Activated naive CD4-positive, alpha-beta T cell treated with anti-CD3 and anti-CD28 coated beads for 36 hours (primary cell): ENCODE measurements at regions of chr6 and their contacts with region 1.

Region 1: DNA sequence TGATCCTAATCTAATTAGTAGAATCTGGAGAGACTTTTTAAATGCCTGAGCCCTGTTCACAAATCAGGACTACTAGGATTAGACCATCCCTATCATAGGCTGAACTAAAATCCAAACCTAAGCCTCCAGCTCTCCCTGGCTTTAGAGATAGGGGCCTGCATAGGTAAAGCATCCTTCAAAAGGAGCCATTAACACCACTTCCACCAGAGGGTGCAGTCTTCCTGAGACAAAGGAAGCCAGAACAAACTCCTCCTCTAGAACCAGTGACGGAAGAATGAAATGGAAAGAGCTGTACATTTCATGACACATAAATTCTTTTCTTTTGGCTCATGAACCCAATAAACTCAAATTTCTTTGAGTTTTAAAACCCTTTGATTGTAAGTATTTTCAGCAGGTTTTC is 291.2 kb upstream of the ADGRB3 start:
- DNase-seq: peak; percentile 38
- H3K4me3 Mint-ChIP-seq: no peak overlapping the region
- H3K27ac Mint-ChIP-seq: no peak overlapping the region
- H3K4me1 Mint-ChIP-seq: no peaks in the 10 kb centered on the region
- H3K27me3 Mint-ChIP-seq: no peaks in the 10 kb centered on the region

Region 2: GRCh38 chr6:68967549-68968300 is 623.8 kb after region 1 on chr6:
- CTCF ChIA-PET with region 1: no interaction called
- intact Hi-C with region 1: loop called (anchors 5 kb)
- DNase-seq: peak; percentile 68
- H3K4me3 Mint-ChIP-seq: no peak overlapping the region
- H3K27ac Mint-ChIP-seq: no peak overlapping the region
- H3K4me1 Mint-ChIP-seq: peaks cover 7% of the 10 kb centered on the region
- H3K27me3 Mint-ChIP-seq: peaks cover 2% of the 10 kb centered on the region